ENCODE measurements at regions of chrX and their contacts with region 1.

Region 1: DNA sequence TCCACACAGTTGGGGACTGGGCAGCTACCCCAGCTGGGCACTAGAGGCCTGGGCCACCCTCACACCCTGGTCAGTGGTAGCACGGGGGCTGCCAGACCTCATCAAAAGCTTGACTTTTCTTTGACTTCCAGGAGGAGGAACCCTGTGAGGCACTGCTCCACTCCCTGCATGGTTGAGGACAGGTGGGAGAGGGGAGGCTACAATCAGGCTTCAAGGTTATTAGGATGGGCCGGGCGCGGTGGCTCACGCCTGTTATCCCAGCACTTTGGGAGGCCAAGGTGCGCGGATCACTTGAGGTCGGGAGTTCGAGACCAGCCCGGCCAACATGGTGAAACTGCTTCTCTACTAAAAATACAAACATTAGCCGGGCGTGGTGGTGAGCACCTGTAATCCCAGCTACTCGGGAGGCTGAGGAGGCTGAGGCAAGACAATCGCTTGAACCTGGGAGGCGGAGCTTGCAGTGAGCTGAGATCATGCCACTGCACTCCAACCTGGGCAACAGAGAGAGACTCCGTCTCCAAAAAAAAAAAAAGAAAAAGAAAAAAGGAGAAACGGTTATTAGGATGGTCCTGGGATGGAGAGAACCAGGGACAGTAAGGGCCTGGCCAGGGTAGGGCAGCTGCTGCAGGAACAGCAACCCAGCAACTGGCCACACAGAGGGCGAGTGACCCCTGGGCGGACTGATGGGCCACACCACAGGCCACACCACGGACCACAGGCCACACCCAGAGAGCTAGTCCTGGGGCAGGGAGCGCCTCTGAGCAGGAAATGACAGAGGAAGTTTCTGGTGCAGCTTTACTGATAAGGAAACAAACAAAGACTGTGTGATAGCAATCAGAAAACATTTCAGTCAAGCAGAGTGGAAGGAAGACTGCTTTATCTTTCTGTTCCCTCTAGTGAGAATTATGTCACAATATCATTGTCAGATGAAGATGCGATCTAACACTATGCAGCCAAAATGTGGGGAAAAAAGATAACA is 20.5 kb upstream of the OPN1LW start:
- DNase-seq: peak; percentile 65
- H3K4me3 Mint-ChIP-seq: peak overlapping the region; percentile 43
- H3K27ac Mint-ChIP-seq: peak overlapping the region; percentile 77
- H3K4me1 Mint-ChIP-seq: peaks cover 27% of the 10 kb centered on the region
- H3K27me3 Mint-ChIP-seq: no peaks in the 10 kb centered on the region

Region 2: DNA sequence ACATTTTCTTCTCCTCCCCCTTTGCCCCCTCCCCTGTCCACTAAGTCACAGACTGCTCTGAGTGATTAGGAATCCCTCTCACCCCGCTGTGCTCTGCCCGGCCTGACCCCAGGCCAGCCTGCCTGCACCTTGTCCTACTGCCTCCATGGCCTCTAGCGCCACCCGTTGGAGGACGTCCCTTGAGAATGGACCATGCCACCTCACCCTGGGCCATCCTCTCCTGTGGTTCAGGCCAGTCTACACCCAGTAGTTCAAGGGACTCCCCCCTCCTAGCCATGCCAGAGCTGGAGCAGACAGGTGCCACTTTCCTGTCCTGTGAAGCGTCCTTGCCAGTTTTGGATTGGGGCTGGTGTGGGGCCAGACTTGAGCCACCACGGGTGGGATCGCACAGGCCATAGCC is 94.1 kb before region 1 on chrX:
- CTCF ChIA-PET with region 1: no interaction called
- POLR2A ChIA-PET with region 1: no interaction called
- DNase-seq: no peak
- H3K4me3 Mint-ChIP-seq: no peak overlapping the region
- H3K27ac Mint-ChIP-seq: no peak overlapping the region
- H3K4me1 Mint-ChIP-seq: peaks cover 4% of the 10 kb centered on the region
- H3K27me3 Mint-ChIP-seq: no peaks in the 10 kb centered on the region

Region 3: GRCh38 chrX:154136627-154137161 is 13.2 kb after region 1 on chrX:
- CTCF ChIA-PET with region 1: interaction called, 9 read pairs
- POLR2A ChIA-PET with region 1: interaction called, 17 read pairs
- DNase-seq: peak; percentile 66
- H3K4me3 Mint-ChIP-seq: peak overlapping the region; percentile 64
- H3K27ac Mint-ChIP-seq: peak overlapping the region; percentile 92
- H3K4me1 Mint-ChIP-seq: peaks cover 39% of the 10 kb centered on the region
- H3K27me3 Mint-ChIP-seq: no peaks in the 10 kb centered on the region

Measured in activated CD4-positive, alpha-beta memory T cell treated with anti-CD3 and anti-CD28 coated beads, Interleukin-2, amount 10 ng/mL, durations not matched to agents 7 days and 5 days (primary cell).